Activated CD4-positive, alpha-beta memory T cell treated with anti-CD3 and anti-CD28 coated beads for 36 hours (primary cell): ENCODE measurements at regions of chr14 and their contacts with region 1.

Region 1: DNA sequence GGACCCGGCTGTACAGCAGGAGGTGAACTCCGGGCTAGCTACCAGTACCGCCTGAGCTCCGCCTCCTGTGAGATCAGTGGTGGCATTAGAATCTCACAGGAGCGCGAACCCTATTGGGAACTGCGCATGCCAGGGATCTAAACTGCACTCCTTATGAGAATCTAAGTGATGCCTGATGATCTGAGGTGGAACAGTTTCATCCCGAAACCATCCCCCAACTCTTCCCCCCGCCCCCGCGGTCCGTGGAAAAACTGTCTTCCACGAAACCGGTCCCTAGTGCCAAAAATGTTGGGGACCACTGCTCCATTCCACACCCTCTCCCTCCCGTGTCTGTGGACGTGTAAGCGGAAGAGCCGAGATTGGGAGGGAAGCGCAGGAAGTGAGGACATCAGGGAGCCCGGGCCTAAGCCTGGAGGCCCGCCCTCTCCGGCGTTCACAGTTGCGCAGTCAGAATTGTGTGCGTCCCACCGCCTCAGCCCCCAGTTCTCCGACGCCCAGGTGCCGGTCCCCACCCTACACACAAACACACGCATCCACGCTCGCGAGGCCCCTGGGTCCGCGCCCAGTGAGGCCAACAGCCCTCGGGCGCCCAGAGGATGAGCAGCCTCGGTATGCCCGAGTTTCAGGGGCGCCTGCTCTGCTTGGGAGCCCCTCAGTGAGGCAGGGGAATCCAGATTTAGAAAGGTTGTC is 1.8 kb upstream of the RNASE4 start:
- DNase-seq: peak; percentile 85
- H3K4me3 Mint-ChIP-seq: no peak overlapping the region
- H3K27ac Mint-ChIP-seq: no peak overlapping the region
- H3K4me1 Mint-ChIP-seq: peaks cover 27% of the 10 kb centered on the region
- H3K27me3 Mint-ChIP-seq: no peaks in the 10 kb centered on the region

Region 2: DNA sequence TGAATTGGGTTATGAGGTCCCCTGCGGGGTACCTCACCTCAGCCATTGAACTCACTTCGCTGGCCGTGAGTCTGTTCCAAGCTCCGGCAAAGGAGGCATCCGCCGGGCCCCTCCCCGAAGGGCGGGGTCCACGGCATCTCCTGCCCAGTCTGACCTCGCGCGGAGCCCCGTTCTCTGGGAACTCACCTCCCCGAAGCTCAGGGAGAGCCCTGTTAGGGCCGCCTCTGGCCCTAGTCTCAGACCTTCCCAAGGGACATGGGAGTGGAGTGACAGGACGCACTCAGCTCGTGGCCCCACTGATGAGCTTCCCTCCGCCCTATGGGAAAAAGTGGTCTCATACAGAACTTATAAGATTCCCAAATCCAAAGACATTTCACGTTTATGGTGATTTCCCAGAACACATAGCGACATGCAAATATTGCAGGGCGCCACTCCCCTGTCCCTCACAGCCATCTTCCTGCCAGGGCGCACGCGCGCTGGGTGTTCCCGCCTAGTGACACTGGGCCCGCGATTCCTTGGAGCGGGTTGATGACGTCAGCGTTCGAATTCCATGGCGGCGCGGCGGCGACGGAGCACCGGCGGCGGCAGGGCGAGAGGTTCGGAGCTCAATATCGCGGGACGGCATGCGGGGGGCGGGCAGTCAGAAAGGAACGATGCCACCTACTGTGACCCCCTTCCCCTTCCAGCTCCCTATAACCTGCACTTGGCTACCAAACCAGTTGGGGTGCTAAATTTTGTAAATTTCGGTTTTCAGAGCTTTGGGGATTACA is 339.3 kb before region 1 on chr14 and contains the start of gene PARP2:
- CTCF ChIA-PET with region 1: interaction called, 3 read pairs
- POLR2A ChIA-PET with region 1: interaction called, 17 read pairs
- intact Hi-C with region 1: loop called (anchors 1 kb)
- DNase-seq: peak; percentile 97
- H3K4me3 Mint-ChIP-seq: peak within 1 kb of the TSS; percentile 93
- H3K27ac Mint-ChIP-seq: peak within 1 kb of the TSS; percentile 94
- H3K4me1 Mint-ChIP-seq: peaks cover 19% of the 10 kb centered on the region
- H3K27me3 Mint-ChIP-seq: peaks cover 3% of the 10 kb centered on the region
- total RNA-seq, gene PARP2: 46.3 to 47.3 TPM

Region 3: DNA sequence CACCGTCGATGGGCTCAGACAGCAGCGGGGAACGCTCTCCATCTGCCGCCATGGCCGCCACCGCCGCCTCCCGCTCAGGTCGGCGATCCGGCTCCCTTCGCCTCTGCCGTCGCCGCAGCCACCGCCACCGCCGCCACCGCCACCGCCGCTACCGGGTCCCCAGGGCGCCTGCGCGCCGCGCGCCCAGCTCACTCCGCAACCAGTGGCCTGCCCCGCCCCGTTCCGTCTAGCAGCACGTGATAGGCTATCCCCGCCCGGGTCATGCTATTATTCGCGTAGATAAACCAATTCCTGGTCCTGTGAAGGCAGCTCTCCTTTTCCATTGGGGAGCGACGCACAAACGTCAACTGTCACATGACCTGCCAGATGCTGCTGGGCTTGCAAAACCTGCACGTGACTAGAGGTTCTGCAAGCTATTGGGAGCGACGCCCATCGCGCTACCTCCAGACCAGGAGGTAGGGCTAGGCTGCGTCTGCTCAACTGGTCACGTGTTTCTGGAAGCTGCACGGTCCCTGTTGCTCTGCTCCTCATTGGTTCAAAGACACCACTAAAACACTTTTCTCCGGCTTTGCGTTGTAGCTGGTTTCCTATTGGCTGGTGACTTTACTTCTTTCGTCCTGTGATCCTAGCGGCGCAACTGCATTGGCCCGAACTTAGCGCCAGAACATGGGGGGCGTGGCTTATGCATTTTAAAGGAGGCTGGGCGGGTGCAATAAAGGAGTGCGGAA is 221.1 kb before region 1 on chr14 and contains the start of gene PIP4P1:
- CTCF ChIA-PET with region 1: no interaction called
- POLR2A ChIA-PET with region 1: no interaction called
- intact Hi-C with region 1: loop called (anchors 2 kb)
- DNase-seq: peak; percentile 99
- H3K4me3 Mint-ChIP-seq: peak within 1 kb of the TSS; percentile 91
- H3K27ac Mint-ChIP-seq: peak within 1 kb of the TSS; percentile 93
- H3K4me1 Mint-ChIP-seq: peaks cover 33% of the 10 kb centered on the region
- H3K27me3 Mint-ChIP-seq: no peaks in the 10 kb centered on the region
- total RNA-seq, gene PIP4P1: 31.1 to 35.2 TPM

Region 4: GRCh38 chr14:20632682-20633428 is 49.7 kb before region 1 on chr14:
- CTCF ChIA-PET with region 1: interaction called, 9 read pairs
- POLR2A ChIA-PET with region 1: interaction called, 12 read pairs
- intact Hi-C with region 1: loop called (anchors 1 kb)
- DNase-seq: peak; percentile 81
- H3K4me3 Mint-ChIP-seq: peak overlapping the region; percentile 76
- H3K27ac Mint-ChIP-seq: peak overlapping the region; percentile 87
- H3K4me1 Mint-ChIP-seq: peaks cover 42% of the 10 kb centered on the region
- H3K27me3 Mint-ChIP-seq: peaks cover 38% of the 10 kb centered on the region

Region 5: DNA sequence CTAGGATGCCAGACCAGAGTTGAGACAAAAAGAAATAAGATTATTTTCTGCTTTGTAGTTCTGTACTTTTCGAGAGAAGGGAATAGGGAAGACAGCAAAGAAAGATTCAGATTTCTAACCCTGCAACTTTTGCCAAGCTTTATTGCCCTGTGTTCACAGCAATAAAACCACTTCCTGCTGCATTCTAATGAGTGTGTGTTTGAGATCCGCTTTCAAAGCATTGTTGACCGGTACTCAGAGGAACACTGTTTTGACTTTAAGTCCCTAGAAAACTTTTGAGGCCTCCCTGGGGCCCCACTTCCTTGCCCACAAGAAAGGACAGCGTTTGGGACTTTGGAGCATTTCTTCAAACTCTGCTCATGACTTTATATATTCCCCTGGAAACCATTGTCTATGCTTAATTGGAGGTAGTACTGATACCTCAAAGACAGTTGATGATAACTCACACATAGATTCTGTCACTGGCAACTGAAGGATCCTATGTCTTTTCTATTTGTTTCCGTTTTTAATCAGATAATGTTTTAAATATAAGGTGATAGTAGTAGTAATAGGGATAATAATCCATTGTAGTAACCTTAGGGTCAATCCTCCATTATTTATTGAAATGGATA is 99.8 kb after region 1 on chr14:
- CTCF ChIA-PET with region 1: no interaction called
- POLR2A ChIA-PET with region 1: no interaction called
- intact Hi-C with region 1: loop called (anchors 5 kb)
- DNase-seq: peak; percentile 32
- H3K4me3 Mint-ChIP-seq: peak overlapping the region; percentile 64
- H3K27ac Mint-ChIP-seq: peak overlapping the region; percentile 79
- H3K4me1 Mint-ChIP-seq: peaks cover 29% of the 10 kb centered on the region
- H3K27me3 Mint-ChIP-seq: no peaks in the 10 kb centered on the region

Region 6: DNA sequence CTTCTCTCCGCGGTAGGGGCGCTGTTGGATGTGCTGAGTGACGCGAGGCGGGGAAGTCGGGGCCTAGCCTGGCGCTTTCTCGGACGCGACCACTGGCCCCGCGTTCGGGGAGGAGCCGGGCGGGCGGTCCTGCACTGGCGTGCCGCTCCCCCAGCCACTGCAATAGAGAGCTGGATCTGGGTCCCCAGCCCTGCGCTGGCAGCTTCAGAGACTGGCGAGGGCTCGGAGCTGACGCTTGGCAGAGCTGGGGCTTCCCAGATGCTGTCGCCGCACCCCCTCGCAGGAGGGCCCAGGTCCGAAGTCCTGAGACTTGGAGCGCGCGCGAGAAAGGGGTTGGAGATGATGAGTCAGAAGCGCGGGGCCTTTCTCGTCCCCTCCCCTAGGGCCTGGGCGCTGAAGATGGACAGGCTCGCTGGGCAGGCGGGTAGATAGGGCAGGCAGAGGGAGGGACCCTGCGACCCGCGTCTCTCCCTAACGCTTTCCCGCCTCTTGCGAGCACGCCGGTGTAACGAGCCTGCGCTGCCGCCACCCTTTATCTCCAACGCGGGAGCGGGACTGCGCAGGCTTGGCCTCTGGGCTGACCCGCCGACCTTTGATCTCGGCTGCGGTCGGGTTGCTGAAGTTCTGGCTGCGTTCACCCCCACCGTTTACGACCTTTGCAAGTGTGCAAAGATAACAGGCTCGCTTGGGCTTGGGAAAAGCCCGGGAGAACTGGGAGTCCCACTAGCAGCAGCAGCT is 421.3 kb after region 1 on chr14:
- CTCF ChIA-PET with region 1: no interaction called
- POLR2A ChIA-PET with region 1: interaction called, 3 read pairs
- intact Hi-C with region 1: loop called (anchors 5 kb)
- DNase-seq: peak; percentile 96
- H3K4me3 Mint-ChIP-seq: peak overlapping the region; percentile 85
- H3K27ac Mint-ChIP-seq: peak overlapping the region; percentile 76
- H3K4me1 Mint-ChIP-seq: peaks cover 41% of the 10 kb centered on the region
- H3K27me3 Mint-ChIP-seq: no peaks in the 10 kb centered on the region